Activated T-helper 2 cell treated with anti-CD3 and anti-CD28 coated beads, Interferon-gamma antibody, Interleukin-2, Interleukin-4, amounts not matched to agents 10 μg/mL and 5 μg/mL and 100 μg/mL, durations not matched to agents 14 hours and 24 hours and 36 hours (primary cell): ENCODE measurements at regions of chr11 and their contacts with region 1.

Region 1: GRCh38 chr11:114260483-114260882 is 35.7 kb upstream of the NNMT start:
- DNase-seq: no peak
- H3K4me3 Mint-ChIP-seq: no peak overlapping the region
- H3K27ac Mint-ChIP-seq: no peak overlapping the region
- H3K4me1 Mint-ChIP-seq: no peaks in the 10 kb centered on the region
- H3K27me3 Mint-ChIP-seq: no peaks in the 10 kb centered on the region

Region 2: GRCh38 chr11:113896156-113896879 is 364.2 kb before region 1 on chr11:
- intact Hi-C with region 1: loop called (anchors 2 kb)
- DNase-seq: no peak
- H3K4me3 Mint-ChIP-seq: no peak overlapping the region
- H3K27ac Mint-ChIP-seq: no peak overlapping the region
- H3K4me1 Mint-ChIP-seq: peaks cover 3% of the 10 kb centered on the region
- H3K27me3 Mint-ChIP-seq: peaks cover 9% of the 10 kb centered on the region

Region 3: GRCh38 chr11:113994077-113994954 is 266.2 kb before region 1 on chr11:
- intact Hi-C with region 1: loop called (anchors 1 kb)
- DNase-seq: no peak
- H3K4me3 Mint-ChIP-seq: no peak overlapping the region
- H3K27ac Mint-ChIP-seq: no peak overlapping the region
- H3K4me1 Mint-ChIP-seq: no peaks in the 10 kb centered on the region
- H3K27me3 Mint-ChIP-seq: peaks cover 10% of the 10 kb centered on the region

Region 4: DNA sequence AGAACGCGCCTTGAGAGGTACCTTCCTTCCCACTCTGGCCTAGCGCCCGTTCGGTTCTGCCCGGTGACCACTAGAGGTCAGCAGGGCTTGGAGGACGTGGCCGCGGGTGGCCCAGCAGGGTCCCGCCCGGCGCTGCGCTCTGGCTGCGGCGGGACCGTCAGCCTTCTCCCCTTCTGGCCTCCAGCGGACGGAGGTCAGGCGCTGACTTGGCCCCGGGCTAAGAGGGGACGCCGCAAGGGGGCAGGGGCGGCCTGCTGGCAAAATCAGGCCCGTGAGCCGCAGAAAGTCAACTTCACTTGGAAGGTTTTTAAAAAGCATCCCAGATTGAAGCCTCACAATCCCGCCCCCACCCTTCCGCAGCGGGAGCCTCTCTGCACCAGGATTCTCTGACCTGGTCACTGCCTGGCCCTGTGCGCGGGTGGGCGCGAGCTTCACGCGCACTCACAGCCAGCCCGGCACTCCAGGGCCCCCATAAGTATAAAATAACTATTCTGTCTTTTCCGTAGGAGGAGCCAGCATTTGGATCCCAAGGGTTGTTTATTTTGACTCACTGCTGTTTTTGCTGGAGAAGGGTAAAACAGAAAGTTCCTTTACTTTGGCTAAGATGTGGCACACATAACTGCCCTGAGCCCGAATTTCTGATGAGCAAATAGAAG is 224.2 kb before region 1 on chr11:
- intact Hi-C with region 1: loop called (anchors 1 kb)
- DNase-seq: peak; percentile 38
- H3K4me3 Mint-ChIP-seq: no peak overlapping the region
- H3K27ac Mint-ChIP-seq: no peak overlapping the region
- H3K4me1 Mint-ChIP-seq: peaks cover 1% of the 10 kb centered on the region
- H3K27me3 Mint-ChIP-seq: peaks cover 32% of the 10 kb centered on the region

Region 5: DNA sequence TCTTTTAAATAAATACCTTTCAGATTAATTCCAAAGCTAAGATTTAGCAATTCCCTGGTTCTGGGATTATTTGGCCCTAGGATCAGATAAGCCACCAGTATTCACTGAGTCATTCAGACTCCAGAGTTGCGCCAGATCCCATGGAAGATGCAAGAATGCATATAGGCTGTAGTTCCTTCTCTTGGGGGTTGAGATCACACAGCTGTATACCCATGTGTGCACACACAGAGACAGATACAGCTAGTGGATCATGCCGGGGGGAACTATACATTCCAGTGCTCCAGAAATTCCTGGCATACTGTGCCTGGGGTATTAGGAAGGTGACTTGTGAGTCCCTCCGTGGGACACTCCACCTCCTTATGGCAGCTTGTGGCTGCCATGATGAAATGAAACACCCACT is 125.6 kb before region 1 on chr11:
- intact Hi-C with region 1: no loop called
- DNase-seq: no peak
- H3K4me3 Mint-ChIP-seq: no peak overlapping the region
- H3K27ac Mint-ChIP-seq: no peak overlapping the region
- H3K4me1 Mint-ChIP-seq: peaks cover 29% of the 10 kb centered on the region
- H3K27me3 Mint-ChIP-seq: peaks cover 15% of the 10 kb centered on the region

Region 6: DNA sequence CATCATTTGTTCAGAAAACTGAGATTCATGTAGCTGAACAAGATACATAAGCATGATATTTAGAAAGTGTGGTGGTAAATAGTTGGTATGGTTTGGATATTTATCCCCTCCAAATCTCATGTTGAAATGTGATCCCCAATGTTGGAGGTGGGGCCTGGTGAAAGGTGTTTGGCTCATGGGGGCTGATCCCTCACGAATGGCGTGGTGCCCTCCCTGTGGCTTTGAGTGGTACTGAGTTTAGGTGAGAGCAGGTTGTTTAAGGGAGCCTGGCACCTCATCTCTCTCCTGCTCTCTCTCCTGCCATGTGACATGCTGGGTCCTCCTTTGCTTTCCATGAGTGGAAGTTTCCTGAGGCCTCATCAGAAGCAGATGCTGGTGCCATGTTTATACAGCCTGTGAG is 251.1 kb after region 1 on chr11:
- intact Hi-C with region 1: no loop called
- DNase-seq: no peak
- H3K4me3 Mint-ChIP-seq: no peak overlapping the region
- H3K27ac Mint-ChIP-seq: no peak overlapping the region
- H3K4me1 Mint-ChIP-seq: no peaks in the 10 kb centered on the region
- H3K27me3 Mint-ChIP-seq: peaks cover 6% of the 10 kb centered on the region